ENCODE measurements at regions of chr3 and their contacts with region 1.

Region 1: GRCh38 chr3:108477511-108478147 is 32.8 kb downstream of the MYH15 start:
- DNase-seq: peak; percentile 38
- H3K4me3 ChIP-seq: no peak overlapping the region
- H3K27ac ChIP-seq: no peak overlapping the region
- H3K4me1 ChIP-seq: peaks cover 0 to 3% of the 10 kb centered on the region in 2 experiments; a peak in 2 of 4 replicates
- H3K27me3 ChIP-seq: no peaks in the 10 kb centered on the region
- CTCF ChIP-seq: peak; percentile 85
- EP300 ChIP-seq: no peak
- RAD21 ChIP-seq: peak; percentile 84

Region 2: DNA sequence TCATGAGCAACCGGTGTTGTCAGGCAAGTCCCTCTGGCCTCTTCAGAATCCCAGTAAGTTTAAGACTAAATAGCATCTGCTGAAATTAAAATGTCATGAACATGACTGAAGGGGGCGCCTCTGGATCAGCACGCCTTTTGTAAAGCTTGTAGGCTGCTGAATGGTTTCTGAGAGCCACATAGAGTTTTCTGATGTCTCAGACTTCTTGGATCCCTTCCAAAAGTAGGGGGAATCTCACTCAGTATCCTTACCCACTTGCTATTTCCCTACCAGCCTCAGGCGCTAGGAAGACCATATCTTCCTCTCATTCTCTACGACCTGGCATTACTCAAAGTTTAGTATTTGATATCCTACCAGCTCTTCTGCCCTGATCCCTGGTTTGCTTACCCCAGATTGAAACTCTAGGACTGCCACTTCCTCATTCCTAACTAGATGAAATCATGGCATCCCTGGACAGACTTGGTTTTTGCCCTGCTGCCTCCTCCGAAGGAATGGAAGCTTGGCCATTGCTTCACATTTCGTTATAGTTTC is 324.1 kb before region 1 on chr3:
- CTCF ChIA-PET with region 1: interaction called, 25 read pairs
- POLR2A ChIA-PET with region 1: no interaction called
- DNase-seq: peak; percentile 17
- H3K4me3 ChIP-seq: no peak overlapping the region; a peak in 1 of 4 replicates
- H3K27ac ChIP-seq: no peak overlapping the region
- H3K4me1 ChIP-seq: peaks cover 0 to 5% of the 10 kb centered on the region in 2 experiments; a peak in 1 of 4 replicates
- H3K27me3 ChIP-seq: no peaks in the 10 kb centered on the region
- CTCF ChIP-seq: peak; percentile 54
- EP300 ChIP-seq: no peak
- RAD21 ChIP-seq: peak; percentile 74

Region 3: GRCh38 chr3:108250626-108251025 is 227.0 kb before region 1 on chr3:
- CTCF ChIA-PET with region 1: no interaction called
- POLR2A ChIA-PET with region 1: no interaction called
- DNase-seq: no peak
- H3K4me3 ChIP-seq: no peak overlapping the region
- H3K27ac ChIP-seq: no peak overlapping the region
- H3K4me1 ChIP-seq: no peaks in the 10 kb centered on the region
- H3K27me3 ChIP-seq: no peaks in the 10 kb centered on the region
- CTCF ChIP-seq: no peak
- EP300 ChIP-seq: no peak
- RAD21 ChIP-seq: no peak

Region 4: GRCh38 chr3:108406661-108407206 is 70.9 kb before region 1 on chr3:
- CTCF ChIA-PET with region 1: interaction called, 12 read pairs
- POLR2A ChIA-PET with region 1: no interaction called
- DNase-seq: peak; percentile 70
- H3K4me3 ChIP-seq: no peak overlapping the region
- H3K27ac ChIP-seq: no peak overlapping the region
- H3K4me1 ChIP-seq: peaks cover 15 to 18% of the 10 kb centered on the region in 2 experiments
- H3K27me3 ChIP-seq: no peaks in the 10 kb centered on the region
- CTCF ChIP-seq: peak; percentile 83
- EP300 ChIP-seq: no peak
- RAD21 ChIP-seq: peak; percentile 93

Region 5: DNA sequence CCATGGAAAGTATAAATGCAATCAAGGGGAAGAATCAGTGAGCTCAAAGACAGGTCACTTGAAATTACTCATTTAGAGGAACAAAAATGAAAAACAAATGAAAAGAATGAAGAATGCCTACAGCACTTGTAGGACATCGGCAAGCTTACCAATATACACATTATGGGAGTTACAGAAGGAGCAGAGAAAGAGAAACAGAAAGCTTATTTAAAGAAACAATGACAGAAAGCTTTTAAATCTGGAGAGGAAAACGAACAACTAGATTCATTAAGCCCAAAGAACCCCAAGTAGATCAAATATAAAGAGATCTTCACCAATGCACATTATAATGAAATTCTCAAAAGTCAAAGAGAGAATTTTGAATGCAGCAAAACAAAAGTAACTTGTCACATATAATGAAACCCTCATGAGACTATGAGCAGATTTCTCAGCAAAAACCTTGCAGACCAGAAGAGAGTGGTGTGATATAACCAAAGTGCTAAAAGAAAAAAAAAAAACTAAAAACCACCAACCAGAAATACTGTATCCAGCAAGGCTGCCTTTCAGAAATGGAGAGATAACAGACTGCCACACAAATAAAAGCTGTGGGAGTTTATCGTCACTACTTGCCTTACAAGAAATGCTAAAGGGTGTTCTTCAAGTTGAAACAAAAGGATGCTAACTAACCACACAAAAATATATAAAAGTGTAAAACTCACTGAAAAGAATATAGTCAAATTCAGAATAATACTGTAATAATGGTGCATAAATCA is 30.4 kb before region 1 on chr3:
- CTCF ChIA-PET with region 1: interaction called, 35 read pairs
- POLR2A ChIA-PET with region 1: no interaction called
- DNase-seq: no peak
- H3K4me3 ChIP-seq: no peak overlapping the region
- H3K27ac ChIP-seq: no peak overlapping the region
- H3K4me1 ChIP-seq: peaks cover 0 to 3% of the 10 kb centered on the region in 2 experiments; a peak in 2 of 4 replicates
- H3K27me3 ChIP-seq: no peaks in the 10 kb centered on the region
- CTCF ChIP-seq: no peak
- EP300 ChIP-seq: no peak
- RAD21 ChIP-seq: no peak

Region 6: DNA sequence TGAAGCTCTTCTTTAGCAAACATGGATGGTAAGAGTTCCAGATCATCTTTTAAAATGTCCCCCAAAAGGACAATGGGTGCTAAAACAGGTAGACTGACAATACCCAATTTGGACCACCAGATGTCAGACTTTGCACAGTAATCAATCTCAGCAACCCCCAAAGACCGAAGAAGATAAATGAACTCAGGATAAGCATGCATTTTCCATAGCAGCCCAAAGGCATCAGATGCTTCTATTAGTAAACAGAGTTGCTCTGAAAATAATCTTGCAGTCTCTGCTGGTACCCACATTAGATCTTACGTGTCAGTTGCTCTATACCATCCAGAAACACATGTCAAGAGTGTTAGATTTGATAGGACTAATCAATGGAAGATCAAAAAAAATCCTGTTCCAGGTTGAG is 12.1 kb after region 1 on chr3:
- CTCF ChIA-PET with region 1: interaction called, 42 read pairs
- POLR2A ChIA-PET with region 1: no interaction called
- DNase-seq: peak; percentile 45
- H3K4me3 ChIP-seq: no peak overlapping the region; a peak in 1 of 4 replicates
- H3K27ac ChIP-seq: no peak overlapping the region
- H3K4me1 ChIP-seq: peaks cover 18 to 29% of the 10 kb centered on the region in 2 experiments
- H3K27me3 ChIP-seq: no peaks in the 10 kb centered on the region
- CTCF ChIP-seq: peak; percentile 78
- EP300 ChIP-seq: no peak
- RAD21 ChIP-seq: peak; percentile 97